ENCODE measurements at regions of chr6 and their contacts with region 1.

Region 1: GRCh38 chr6:36546920-36547645 is at the start of gene STK38:
- DNase-seq: peak; percentile 96
- H3K4me3 Mint-ChIP-seq: peak within 1 kb of the TSS; percentile 94
- H3K27ac Mint-ChIP-seq: peak within 1 kb of the TSS; percentile 92
- H3K4me1 Mint-ChIP-seq: peaks cover 37% of the 10 kb centered on the region
- H3K27me3 Mint-ChIP-seq: no peaks in the 10 kb centered on the region
- total RNA-seq, gene STK38: 20.7 and 21.5 TPM in 2 replicates

Region 2: DNA sequence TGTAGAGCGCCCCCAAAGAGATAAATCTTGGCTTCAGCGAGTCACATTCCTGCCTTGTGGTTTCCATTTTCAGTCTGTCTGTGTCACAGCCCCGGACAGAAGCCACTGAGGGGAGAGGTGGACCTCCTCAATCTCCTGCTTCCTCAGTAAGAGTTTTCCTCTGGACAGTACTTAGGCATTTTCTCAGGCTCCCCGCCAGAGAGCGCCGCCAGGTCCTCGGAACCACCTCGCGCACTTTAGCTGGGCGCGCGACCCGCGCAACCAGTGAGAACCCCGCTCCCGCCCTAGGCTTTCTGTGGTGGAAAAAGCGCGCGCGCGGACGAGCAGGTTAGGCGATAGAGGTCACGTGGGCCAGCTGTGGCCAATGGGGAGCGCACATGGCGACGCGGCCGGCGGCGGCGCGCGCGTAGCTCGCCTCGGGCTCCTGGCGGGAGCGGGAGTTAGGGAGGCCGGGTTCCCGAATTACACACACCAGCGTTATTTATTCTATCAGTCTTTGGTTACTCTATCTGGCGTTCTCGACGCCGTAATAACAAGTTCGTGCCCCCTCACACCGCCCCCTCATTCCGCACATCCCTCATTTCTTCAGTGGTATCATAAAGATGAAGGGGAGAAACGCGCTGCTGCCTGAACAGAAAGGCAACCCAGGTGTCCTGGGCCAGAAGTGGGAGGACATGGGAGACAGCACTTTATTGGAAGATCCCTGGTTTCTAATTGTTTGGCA is 123.8 kb before region 1 on chr6:
- intact Hi-C with region 1: loop called (anchors 1 kb)
- DNase-seq: peak; percentile 99
- H3K4me3 Mint-ChIP-seq: peak overlapping the region; percentile 88
- H3K27ac Mint-ChIP-seq: peak overlapping the region; percentile 87
- H3K4me1 Mint-ChIP-seq: peaks cover 15% of the 10 kb centered on the region
- H3K27me3 Mint-ChIP-seq: peaks cover 5% of the 10 kb centered on the region

Region 3: DNA sequence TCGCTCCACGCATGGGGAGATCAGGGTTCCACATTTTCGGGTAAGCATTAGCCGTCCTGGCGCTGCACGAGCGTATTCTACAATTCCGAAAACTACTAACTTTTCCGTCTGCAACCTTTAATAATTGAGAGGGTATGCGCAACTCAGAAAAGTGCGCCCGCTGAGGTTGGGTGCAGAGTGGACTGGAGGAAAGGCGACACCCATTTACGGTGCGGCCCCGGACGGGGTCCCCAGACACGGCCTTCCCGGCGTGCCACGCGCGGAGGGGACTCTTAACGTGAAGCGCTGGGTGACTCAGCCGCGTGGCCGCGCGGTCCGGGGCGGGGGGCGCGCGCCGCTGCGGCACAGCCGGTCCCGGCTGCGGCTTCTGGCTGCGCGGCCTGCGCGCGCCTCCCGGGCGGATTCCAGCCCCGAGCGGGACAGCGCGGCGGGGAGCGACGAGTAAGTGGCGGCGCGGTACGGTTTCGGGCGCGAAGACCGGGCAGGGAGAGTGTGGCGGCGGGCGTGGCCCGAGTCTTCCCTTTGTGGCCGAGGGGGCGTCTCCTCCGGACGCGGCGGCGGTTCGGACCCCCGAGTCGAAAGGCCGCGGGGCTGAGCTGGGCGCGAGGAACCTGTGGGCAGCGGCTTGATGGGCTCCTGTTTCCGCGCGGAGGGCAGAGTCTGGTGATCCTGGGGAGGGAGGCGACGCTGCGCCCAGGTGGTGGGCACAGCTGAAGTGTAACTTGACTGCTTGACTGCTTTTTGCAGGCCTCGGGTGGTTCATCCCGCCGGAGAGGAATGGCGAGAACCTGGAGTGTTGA is 104.2 kb before region 1 on chr6 and contains the starts of genes KCTD20 and PXT1:
- intact Hi-C with region 1: loop called (anchors 2 kb)
- DNase-seq: peak; percentile 96
- H3K4me3 Mint-ChIP-seq: peak within 1 kb of the TSS; percentile 96
- H3K27ac Mint-ChIP-seq: peak within 1 kb of the TSS; percentile 98
- H3K4me1 Mint-ChIP-seq: peaks cover 28% of the 10 kb centered on the region
- H3K27me3 Mint-ChIP-seq: no peaks in the 10 kb centered on the region
- total RNA-seq, gene KCTD20: 62.2 and 62.4 TPM in 2 replicates
- total RNA-seq, gene PXT1: 0.09 and 0.30 TPM in 2 replicates

Region 4: GRCh38 chr6:36514554-36515456 is 32.3 kb before region 1 on chr6:
- intact Hi-C with region 1: no loop called
- DNase-seq: no peak
- H3K4me3 Mint-ChIP-seq: no peak overlapping the region
- H3K27ac Mint-ChIP-seq: no peak overlapping the region
- H3K4me1 Mint-ChIP-seq: peaks cover 12% of the 10 kb centered on the region
- H3K27me3 Mint-ChIP-seq: no peaks in the 10 kb centered on the region